ENCODE measurements at regions of chr16 and their contacts with region 1.

Region 1: GRCh38 chr16:29995911-29996772 is at the start of gene INO80E:
- DNase-seq: peak; percentile 98
- H3K4me3 ChIP-seq: peak within 1 kb of the TSS; percentile 68 to 78
- H3K27ac ChIP-seq: peak within 1 kb of the TSS; percentile 94 to 95
- H3K4me1 ChIP-seq: peaks cover 10% of the 10 kb centered on the region
- H3K27me3 ChIP-seq: no peaks in the 10 kb centered on the region
- CTCF ChIP-seq: peak in 2 of 4 experiments; percentile 13 to 36
- POLR2A ChIP-seq: peak; percentile 43
- total RNA-seq, gene INO80E: 51.8 to 113 TPM

Region 2: DNA sequence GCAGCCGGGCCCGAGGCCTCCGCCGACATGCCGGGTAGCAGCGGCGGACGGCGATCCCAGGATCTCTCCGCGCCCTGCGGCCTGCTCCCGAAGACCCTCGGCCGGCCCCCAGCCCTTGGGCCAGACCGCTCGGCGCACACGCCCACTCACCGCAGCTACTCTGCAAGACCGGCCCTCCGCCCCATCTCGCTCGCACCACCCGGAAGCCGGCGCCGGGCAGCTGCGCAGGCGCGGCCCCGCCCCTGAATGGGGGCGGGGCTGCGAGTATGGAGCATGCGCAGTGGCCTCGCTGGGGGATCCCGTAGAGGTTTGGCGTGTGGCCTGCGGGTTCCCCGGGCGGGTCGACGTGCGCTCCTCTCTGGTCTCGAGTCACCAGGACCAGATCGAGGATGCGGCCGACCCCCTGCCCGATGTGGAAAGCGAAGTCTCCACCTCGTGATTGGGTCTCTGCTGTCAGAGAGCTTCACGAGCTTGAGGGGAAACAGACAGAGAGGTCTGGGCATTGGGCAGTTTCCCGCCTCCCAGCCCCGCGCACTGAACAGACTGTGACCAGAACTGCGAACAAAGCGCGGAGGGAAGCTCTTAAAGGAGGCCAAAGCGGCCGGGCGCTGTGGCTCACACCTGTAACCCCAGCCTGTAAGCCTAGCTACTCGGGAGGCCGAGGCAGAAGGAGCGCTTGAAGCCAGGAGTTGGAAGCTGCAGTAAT is 70.0 kb before region 1 on chr16 and contains the start of gene KCTD13:
- intact Hi-C with region 1: loop called (anchors 10 kb)
- DNase-seq: peak; percentile 82
- H3K4me3 ChIP-seq: peak within 1 kb of the TSS; percentile 83 to 98
- H3K27ac ChIP-seq: peak within 1 kb of the TSS; percentile 84 to 89
- H3K4me1 ChIP-seq: peaks cover 5% of the 10 kb centered on the region
- H3K27me3 ChIP-seq: no peaks in the 10 kb centered on the region
- CTCF ChIP-seq: peak in 2 of 4 experiments; percentile 4 to 29
- POLR2A ChIP-seq: peak; percentile 90
- total RNA-seq, gene KCTD13: 15.9 to 134 TPM